ENCODE measurements at regions of chr20 and their contacts with region 1.

Region 1: DNA sequence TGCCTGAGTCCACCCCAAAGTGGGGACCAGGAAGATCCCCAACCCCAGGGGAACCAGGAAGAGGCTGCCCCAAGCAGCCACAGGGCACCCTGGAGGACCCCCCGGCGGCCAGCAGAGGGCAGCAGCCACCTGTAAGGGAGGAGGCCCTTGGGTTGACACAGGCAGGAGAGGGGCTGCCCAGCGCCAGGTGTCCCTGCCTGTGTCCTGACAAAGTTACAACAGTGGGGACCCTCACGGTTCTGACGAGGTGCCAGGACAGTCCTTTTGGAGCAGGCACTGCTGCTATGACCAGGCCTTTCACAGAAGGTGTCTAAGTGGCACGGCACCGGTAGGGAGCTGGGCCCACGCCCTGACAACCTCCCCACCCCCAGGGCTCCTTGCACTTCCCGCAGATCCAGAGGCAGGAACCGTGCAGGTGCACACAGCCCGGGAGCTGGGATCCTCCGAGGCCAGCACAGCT is 176.7 kb downstream of the BMP7 start:
- DNase-seq: peak; percentile 95
- H3K4me3 Mint-ChIP-seq: no peak overlapping the region
- H3K27ac Mint-ChIP-seq: no peak overlapping the region
- H3K4me1 Mint-ChIP-seq: peaks cover 9% of the 10 kb centered on the region
- H3K27me3 Mint-ChIP-seq: peaks cover 88% of the 10 kb centered on the region
- CTCF ChIP-seq: peak; percentile 99

Region 2: DNA sequence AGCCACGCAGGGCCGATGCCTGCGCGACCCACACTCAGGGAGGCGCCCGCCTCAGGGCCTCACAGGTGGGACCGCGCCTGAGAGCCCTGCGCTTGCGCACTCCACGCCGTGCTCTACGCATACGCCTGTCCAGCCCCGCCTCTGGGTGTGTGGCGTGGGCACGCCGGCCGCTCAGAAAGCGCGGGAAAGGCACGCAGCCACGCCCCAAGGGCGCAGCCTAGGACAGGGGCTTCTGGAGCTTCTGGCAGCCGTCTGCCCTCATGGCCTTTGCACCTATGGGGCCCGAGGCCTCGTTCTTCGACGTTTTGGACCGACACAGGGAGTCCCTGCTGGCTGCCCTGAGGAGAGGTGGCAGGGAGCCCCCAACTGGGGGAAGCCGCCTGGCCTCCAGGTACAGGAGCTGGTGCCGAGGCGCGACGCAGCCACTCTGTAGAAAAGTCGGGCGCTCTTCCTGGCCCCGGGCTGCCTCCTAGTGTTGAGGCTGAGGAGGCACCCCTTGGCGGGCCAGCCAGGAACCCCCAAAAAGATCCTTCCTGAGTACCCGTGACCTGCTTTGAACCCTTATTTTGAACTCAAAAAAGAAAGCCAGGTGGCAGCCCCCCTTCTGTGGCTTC is 240.0 kb after region 1 on chr20 and contains the start of gene SPO11:
- CTCF ChIA-PET with region 1: interaction called, 35 read pairs
- intact Hi-C with region 1: loop called (anchors 5 kb)
- DNase-seq: no peak
- H3K4me3 Mint-ChIP-seq: no peak within 1 kb of the TSS
- H3K27ac Mint-ChIP-seq: no peak within 1 kb of the TSS
- H3K4me1 Mint-ChIP-seq: no peaks in the 10 kb centered on the region
- H3K27me3 Mint-ChIP-seq: peaks cover 82% of the 10 kb centered on the region
- CTCF ChIP-seq: no peak
- total RNA-seq, gene SPO11: not detected in 2 replicates

Region 3: DNA sequence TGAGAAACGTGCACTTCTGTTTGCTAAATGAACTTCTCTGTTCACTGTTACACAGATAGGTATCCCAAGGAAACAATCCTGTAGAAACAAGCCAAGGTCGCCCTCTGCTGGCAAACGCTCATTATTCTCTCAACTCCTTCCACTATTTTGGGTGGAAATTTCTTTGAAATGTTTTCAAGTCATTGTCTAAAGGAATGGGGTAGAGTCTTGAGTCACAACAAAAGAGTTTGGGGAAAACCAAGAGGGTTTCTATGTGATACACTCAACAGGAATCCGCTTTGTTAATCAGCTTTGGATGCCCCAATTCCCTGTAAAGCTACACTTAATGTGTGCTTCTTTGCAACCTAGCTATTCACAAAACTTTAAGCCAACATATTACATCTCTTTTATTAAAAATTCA is 256.8 kb after region 1 on chr20:
- CTCF ChIA-PET with region 1: interaction called, 29 read pairs
- intact Hi-C with region 1: loop called (anchors 1 kb)
- DNase-seq: peak; percentile 85
- H3K4me3 Mint-ChIP-seq: no peak overlapping the region
- H3K27ac Mint-ChIP-seq: no peak overlapping the region
- H3K4me1 Mint-ChIP-seq: peaks cover under 1% of the 10 kb centered on the region
- H3K27me3 Mint-ChIP-seq: peaks cover 49% of the 10 kb centered on the region
- CTCF ChIP-seq: peak; percentile 66